ENCODE measurements at regions of chr3 and their contacts with region 1.

Region 1: GRCh38 chr3:181176601-181177000 is 187.1 kb upstream of the DNAJC19 start:
- DNase-seq: peak; percentile 31 to 76
- H3K4me3 ChIP-seq: no peak overlapping the region
- H3K27ac ChIP-seq: no peak overlapping the region
- H3K4me1 ChIP-seq: no peaks in the 10 kb centered on the region
- H3K27me3 ChIP-seq: no peaks in the 10 kb centered on the region
- CTCF ChIP-seq: peak in 2 of 3 donors; percentile 45 to 64
- POLR2A ChIP-seq: no peak

Region 2: GRCh38 chr3:179432021-179432420 is 1744.6 kb before region 1 on chr3:
- intact Hi-C with region 1: loop called (anchors 10 kb)
- DNase-seq: no peak
- H3K4me3 ChIP-seq: no peak overlapping the region
- H3K27ac ChIP-seq: no peak overlapping the region
- H3K4me1 ChIP-seq: peaks cover 0 to 4% of the 10 kb centered on the region in 2 donors
- H3K27me3 ChIP-seq: no peaks in the 10 kb centered on the region
- CTCF ChIP-seq: no peak
- POLR2A ChIP-seq: no peak

Region 3: DNA sequence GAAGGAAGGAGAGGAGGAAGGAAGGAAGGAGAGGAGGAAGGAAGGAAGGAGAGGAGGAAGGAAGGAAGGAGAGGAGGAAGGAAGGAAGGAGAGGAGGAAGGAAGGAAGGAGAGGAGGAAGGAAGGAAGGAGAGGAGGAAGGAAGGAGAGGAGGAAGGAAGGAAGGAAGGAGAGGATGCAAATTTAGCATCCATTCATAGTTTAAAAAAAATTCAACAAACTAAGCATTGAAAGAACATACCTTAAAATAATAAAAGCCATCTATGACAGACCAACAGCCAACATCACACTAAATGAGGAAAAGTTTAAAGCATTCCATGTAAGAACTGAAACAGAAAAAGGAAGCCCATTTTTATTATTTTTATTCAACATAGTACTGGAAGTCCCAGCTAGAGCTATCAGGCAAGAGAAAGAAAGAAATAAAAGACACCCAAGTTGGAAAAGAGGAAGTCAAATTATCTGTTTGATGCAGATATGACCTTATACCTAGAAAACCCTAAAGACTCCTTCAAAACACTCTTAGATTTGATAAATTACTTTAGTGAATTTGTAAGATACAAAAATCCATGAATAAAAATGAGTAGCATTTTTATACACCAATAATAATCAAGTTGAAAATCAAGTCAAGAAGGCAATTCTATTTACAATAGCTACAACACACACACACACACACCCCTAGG is 316.3 kb before region 1 on chr3:
- intact Hi-C with region 1: loop called (anchors 10 kb)
- DNase-seq: no peak
- H3K4me3 ChIP-seq: no peak overlapping the region
- H3K27ac ChIP-seq: no peak overlapping the region
- H3K4me1 ChIP-seq: no peaks in the 10 kb centered on the region
- H3K27me3 ChIP-seq: no peaks in the 10 kb centered on the region
- CTCF ChIP-seq: no peak
- POLR2A ChIP-seq: no peak

Region 4: GRCh38 chr3:181493423-181493822 is 316.8 kb after region 1 on chr3:
- intact Hi-C with region 1: no loop called
- DNase-seq: no peak
- H3K4me3 ChIP-seq: no peak overlapping the region
- H3K27ac ChIP-seq: no peak overlapping the region
- H3K4me1 ChIP-seq: no peaks in the 10 kb centered on the region
- H3K27me3 ChIP-seq: no peaks in the 10 kb centered on the region
- CTCF ChIP-seq: no peak
- POLR2A ChIP-seq: no peak